MCF 10A (cell line): ENCODE measurements at regions of chr1 and their contacts with region 1.

Region 1: GRCh38 chr1:234997201-234997895 is 131.3 kb downstream of the TOMM20 start:
- DNase-seq: peak; percentile 100
- H3K4me3 Mint-ChIP-seq: peak overlapping the region; percentile 58
- H3K27ac Mint-ChIP-seq: peak overlapping the region; percentile 93
- H3K4me1 Mint-ChIP-seq: peaks cover 26% of the 10 kb centered on the region
- H3K27me3 Mint-ChIP-seq: no peaks in the 10 kb centered on the region
- CTCF ChIP-seq: no peak

Region 2: DNA sequence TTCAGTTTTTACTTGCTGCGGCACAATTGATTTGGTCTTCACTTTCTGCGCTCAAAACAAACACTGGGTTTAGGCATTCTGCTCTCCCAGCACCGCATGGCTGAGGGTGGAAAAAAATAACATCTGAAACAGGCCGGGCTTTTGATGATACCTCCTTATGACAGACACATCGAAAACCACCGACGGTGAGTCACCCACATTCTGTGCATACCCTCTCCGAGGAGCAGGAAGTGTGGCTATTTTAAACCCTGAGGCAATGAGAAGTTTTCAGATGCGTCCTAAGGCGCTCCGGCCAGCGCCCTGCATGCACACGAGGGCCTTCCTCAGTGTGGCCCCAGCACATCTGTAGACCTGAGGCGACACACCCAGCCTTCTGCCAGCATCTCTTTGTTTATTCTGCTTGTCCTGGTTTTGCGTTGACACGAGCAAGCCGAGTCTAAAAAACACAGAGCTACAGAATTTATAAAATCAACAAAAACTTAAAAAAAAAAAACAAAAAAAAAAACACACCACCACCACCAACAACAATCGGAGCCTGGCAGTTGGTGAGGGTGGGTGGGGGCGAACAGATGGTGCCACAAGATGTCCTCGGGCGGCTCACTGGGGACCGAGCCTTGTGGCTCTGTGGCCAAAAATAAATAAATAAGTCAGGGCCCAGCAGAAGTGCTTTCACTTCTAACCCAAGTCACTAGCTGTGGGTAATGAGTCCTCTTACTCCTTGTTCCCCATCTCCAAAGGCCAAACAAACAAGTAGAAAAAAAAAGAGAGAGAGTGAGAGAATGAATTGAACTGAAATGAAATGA is 224.8 kb before region 1 on chr1:
- CTCF ChIA-PET with region 1: no interaction called
- POLR2A ChIA-PET with region 1: no interaction called
- intact Hi-C with region 1: loop called (anchors 1 kb)
- DNase-seq: peak; percentile 100
- H3K4me3 Mint-ChIP-seq: peak overlapping the region; percentile 51
- H3K27ac Mint-ChIP-seq: peak overlapping the region; percentile 95
- H3K4me1 Mint-ChIP-seq: peaks cover 29% of the 10 kb centered on the region
- H3K27me3 Mint-ChIP-seq: no peaks in the 10 kb centered on the region
- CTCF ChIP-seq: no peak

Region 3: DNA sequence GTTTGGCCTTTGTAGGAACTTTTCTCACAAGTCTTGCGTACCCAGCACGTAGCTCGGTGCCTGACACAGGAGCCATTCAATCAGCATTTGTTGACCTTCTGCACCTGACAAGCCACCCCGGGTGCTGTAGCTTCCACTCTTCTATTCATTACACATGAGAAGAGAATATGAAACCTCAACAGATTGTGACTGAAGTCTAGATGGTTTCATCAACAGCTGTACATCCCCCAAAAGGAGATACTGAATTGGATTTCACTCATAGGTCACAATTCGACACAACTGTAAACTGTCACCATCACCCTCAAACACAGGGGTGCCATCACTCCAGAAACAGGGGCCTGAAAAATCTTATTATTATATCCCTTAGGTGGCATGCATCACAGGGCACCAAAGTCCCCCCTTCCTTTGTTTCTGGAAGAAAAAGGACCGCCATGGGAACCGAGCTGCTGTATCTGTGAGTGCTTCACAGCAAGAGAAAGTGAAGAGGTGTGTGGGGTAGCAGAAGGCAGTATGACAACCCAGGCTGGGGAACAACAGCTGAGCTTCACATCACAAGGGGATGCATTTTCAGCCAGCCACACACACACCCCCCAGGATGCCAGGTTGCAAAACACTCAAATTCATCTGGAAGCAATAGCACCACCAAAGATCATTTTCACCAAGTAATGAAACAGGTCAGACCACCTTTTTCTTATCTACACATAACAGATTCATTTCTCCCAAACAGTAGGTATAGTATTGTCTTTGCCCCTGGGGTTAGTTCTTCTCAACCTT is 94.4 kb before region 1 on chr1:
- CTCF ChIA-PET with region 1: no interaction called
- POLR2A ChIA-PET with region 1: no interaction called
- intact Hi-C with region 1: no loop called
- DNase-seq: no peak
- H3K4me3 Mint-ChIP-seq: no peak overlapping the region
- H3K27ac Mint-ChIP-seq: no peak overlapping the region
- H3K4me1 Mint-ChIP-seq: no peaks in the 10 kb centered on the region
- H3K27me3 Mint-ChIP-seq: no peaks in the 10 kb centered on the region
- CTCF ChIP-seq: no peak

Region 4: GRCh38 chr1:234963180-234963903 is 34.0 kb before region 1 on chr1:
- CTCF ChIA-PET with region 1: interaction called, 3 read pairs
- POLR2A ChIA-PET with region 1: interaction called, 13 read pairs
- intact Hi-C with region 1: loop called (anchors 2 kb)
- DNase-seq: peak; percentile 50
- H3K4me3 Mint-ChIP-seq: no peak overlapping the region
- H3K27ac Mint-ChIP-seq: peak overlapping the region; percentile 28
- H3K4me1 Mint-ChIP-seq: peaks cover 38% of the 10 kb centered on the region
- H3K27me3 Mint-ChIP-seq: no peaks in the 10 kb centered on the region
- CTCF ChIP-seq: no peak

Region 5: GRCh38 chr1:235011599-235012435 is 14.5 kb after region 1 on chr1:
- CTCF ChIA-PET with region 1: interaction called, 7 read pairs
- POLR2A ChIA-PET with region 1: interaction called, 53 read pairs
- intact Hi-C with region 1: loop called (anchors 1 kb)
- DNase-seq: peak; percentile 99
- H3K4me3 Mint-ChIP-seq: peak overlapping the region; percentile 47
- H3K27ac Mint-ChIP-seq: peak overlapping the region; percentile 92
- H3K4me1 Mint-ChIP-seq: peaks cover 14% of the 10 kb centered on the region
- H3K27me3 Mint-ChIP-seq: no peaks in the 10 kb centered on the region
- CTCF ChIP-seq: no peak

Region 6: GRCh38 chr1:235067263-235068172 is 70.2 kb after region 1 on chr1:
- CTCF ChIA-PET with region 1: interaction called, 21 read pairs
- POLR2A ChIA-PET with region 1: interaction called, 60 read pairs
- intact Hi-C with region 1: loop called (anchors 1 kb)
- DNase-seq: peak; percentile 100
- H3K4me3 Mint-ChIP-seq: peak overlapping the region; percentile 54
- H3K27ac Mint-ChIP-seq: peak overlapping the region; percentile 97
- H3K4me1 Mint-ChIP-seq: peaks cover 53% of the 10 kb centered on the region
- H3K27me3 Mint-ChIP-seq: no peaks in the 10 kb centered on the region
- CTCF ChIP-seq: no peak

Region 7: DNA sequence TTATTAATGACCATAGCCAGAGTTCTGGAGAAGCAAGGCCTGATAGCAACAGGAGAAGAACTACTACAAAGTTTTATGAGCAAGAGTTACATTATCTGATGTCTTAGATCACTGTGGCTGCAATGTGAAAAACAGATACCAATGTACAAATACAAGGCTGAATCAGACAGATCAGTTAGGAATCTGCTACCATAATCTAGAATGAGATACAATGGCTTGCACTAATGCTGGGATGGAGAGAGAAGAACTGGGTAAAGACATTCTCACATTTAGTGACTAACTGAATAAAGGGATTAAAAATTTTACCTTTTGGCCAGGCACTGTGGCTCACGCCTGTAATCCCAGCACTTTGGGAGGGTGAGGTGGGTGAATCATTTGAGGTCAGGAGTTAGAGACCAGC is 289.3 kb after region 1 on chr1:
- CTCF ChIA-PET with region 1: no interaction called
- POLR2A ChIA-PET with region 1: no interaction called
- intact Hi-C with region 1: no loop called
- DNase-seq: peak; percentile 29
- H3K4me3 Mint-ChIP-seq: no peak overlapping the region
- H3K27ac Mint-ChIP-seq: no peak overlapping the region
- H3K4me1 Mint-ChIP-seq: peaks cover 29% of the 10 kb centered on the region
- H3K27me3 Mint-ChIP-seq: no peaks in the 10 kb centered on the region
- CTCF ChIP-seq: no peak